ENCODE measurements at regions of chr2 and their contacts with region 1.

Region 1: DNA sequence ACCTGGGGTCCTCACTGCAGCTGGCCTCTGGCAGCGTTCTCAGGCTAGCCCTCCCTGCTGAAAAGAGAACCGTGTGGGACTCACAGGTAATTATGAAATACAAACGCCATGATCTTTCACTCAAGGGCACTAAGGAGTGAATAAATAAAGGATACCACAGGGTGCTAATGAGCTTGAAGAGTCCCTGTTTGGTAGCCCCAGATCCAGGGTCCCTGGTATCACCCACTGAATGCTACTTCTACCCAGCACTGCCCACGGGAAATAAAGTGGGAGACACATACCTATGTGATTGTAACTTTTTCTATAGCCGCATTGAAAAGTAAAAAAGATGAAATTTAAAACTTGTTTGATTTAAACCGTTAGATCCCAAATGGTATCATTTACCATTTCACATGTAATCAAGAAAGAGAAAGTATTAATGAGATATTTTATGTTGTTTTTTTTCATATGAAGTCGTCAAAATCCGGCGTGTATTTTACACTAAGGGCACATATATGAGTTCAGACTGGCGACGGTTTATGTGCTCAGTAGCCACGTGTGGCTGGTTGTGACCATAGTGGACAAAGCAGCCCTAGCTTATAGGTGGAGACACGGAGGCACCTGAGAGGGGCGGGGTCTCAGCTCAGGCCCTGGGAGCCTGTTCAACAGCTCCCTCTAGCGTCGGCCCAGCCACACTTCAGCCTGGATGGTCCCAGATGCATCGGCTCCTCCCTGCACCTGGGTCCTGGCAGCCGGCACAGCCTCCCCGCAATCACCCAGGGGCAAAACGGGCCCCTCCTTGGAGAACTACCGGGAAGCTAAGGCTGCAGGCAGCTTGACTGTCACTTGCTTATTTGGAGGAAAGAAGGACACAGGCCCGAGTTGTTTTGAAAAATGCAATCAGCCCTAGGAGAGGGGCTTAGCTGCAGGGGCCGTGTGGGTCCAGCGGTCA is 39.2 kb downstream of the ODC1 start:
- DNase-seq: peak; percentile 90
- H3K4me3 Mint-ChIP-seq: peak overlapping the region; percentile 60
- H3K27ac Mint-ChIP-seq: peak overlapping the region; percentile 95
- H3K4me1 Mint-ChIP-seq: peaks cover 45% of the 10 kb centered on the region
- H3K27me3 Mint-ChIP-seq: no peaks in the 10 kb centered on the region

Region 2: DNA sequence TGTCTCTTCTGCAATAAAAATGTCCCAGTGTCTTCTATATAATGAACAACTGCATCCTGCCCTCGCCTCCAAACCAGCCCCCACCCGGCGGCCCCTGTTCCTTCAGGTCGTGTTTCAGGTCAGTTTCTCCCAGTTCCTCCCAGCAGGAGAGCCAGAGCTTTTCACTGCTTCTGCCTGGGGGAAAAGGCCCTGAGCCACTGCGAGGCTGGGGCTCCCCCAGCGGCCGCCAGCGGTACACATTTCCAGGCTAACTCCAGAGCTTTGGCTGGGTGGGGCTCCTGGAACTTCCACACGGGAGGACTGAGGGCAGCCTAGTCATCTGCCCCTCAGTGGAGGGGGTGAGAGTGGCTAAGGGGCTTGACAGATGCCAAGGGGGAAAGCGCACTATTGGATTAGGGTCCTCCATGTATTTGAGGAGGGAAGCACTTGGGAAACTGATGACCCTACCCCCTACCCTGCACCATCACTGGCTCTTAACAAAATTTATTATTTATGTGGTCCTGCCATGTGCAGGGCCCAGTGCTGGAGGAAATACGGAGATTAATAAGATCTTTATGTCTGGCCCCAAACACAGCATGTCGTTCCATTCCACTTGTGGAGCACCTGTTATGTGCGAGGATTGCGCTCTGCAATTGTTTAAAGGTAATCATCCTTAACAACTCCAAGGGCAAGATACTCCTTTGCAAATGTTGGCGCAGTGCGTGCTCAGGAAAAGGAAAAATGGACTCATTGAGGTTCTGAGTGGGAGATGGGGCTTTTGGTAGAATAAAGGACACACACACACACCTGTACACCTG is 311.4 kb before region 1 on chr2:
- CTCF ChIA-PET with region 1: interaction called, 15 read pairs
- POLR2A ChIA-PET with region 1: no interaction called
- intact Hi-C with region 1: no loop called
- DNase-seq: peak; percentile 50
- H3K4me3 Mint-ChIP-seq: no peak overlapping the region
- H3K27ac Mint-ChIP-seq: no peak overlapping the region
- H3K4me1 Mint-ChIP-seq: no peaks in the 10 kb centered on the region
- H3K27me3 Mint-ChIP-seq: peaks cover 21% of the 10 kb centered on the region

Region 3: DNA sequence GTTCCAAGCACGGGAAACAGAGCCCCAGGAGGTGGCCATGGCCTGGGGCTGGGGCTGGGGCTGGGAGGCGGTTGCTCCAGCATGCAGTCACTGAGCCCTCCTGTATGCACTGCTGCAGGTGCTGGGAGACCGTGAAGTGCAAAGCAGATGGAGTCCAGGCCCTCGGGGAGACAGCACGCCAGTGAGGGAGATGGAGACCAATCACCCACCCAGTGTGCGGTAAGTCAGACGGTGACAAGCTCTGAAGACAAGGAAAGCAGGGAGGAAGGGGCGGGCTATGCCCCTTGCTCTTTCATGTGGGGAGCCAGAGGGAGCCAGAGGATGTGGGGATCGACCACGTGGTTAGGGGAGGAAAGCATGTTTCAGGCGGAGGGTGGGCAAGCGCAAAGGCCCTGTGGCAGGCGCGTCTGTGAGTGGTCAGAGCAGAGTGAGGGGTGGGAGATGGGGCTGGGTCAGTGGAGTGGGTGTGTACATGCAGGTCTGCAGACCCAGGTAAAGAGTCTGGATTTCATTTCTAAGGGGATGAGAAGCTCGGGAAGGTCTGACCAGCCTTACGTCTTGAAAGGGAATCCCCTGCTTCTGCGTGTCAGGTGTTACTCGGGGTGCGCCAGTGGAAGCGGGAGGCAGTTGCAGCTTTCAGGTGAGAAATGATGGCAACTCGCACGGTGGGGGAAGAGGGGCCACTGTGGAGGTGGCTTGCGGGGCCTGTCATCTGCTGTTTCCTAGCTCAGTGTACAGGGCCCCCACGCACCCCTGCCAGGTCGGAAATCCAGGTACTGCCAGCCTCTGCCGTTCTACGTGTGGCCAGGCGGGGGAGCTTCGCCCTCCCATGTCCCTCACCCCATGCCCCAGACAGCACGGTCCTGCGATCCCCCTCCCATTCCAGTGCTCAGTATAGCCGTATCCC is 266.9 kb before region 1 on chr2:
- CTCF ChIA-PET with region 1: interaction called, 73 read pairs
- POLR2A ChIA-PET with region 1: interaction called, 3 read pairs
- intact Hi-C with region 1: no loop called
- DNase-seq: peak; percentile 43
- H3K4me3 Mint-ChIP-seq: no peak overlapping the region
- H3K27ac Mint-ChIP-seq: no peak overlapping the region
- H3K4me1 Mint-ChIP-seq: peaks cover 13% of the 10 kb centered on the region
- H3K27me3 Mint-ChIP-seq: no peaks in the 10 kb centered on the region

Region 4: DNA sequence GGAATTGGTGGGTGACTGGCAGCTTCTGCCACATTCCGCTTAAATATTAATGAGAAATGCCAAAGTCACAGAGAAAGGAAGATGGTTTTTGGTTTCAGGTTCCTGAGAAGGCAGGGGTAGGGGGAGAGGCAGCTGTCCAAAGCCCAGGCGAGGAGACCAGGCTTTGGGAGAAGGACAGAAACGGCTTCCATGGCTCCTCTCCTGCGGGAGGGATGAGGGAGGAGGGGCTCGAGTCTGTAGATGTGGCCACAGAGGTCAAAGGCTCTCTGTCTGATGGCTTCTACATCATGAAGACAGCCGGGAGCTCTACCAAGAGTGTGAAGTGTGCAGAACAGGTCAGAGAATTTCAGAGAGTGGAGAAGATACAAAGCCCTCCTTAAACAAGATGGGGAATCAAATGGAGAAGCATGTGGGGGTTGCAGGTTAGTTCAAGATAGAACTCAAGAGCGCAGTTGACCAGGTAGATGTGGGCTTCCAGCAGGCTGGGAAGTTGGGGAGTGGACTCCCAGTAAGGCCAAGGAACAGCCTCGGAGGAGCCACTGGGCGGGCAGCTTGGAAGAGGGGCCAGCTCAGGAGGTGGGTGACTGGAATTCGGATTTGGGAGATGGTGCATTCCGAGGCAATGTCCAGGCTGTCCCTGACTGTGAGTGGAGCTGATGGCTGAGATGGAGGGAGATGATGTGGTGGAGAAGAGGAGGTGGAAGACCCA is 130.0 kb before region 1 on chr2:
- CTCF ChIA-PET with region 1: interaction called, 11 read pairs
- POLR2A ChIA-PET with region 1: no interaction called
- intact Hi-C with region 1: no loop called
- DNase-seq: no peak
- H3K4me3 Mint-ChIP-seq: no peak overlapping the region
- H3K27ac Mint-ChIP-seq: no peak overlapping the region
- H3K4me1 Mint-ChIP-seq: peaks cover 22% of the 10 kb centered on the region
- H3K27me3 Mint-ChIP-seq: no peaks in the 10 kb centered on the region

Region 5: GRCh38 chr2:10389573-10389972 is 19.3 kb before region 1 on chr2:
- CTCF ChIA-PET with region 1: interaction called, 21 read pairs
- POLR2A ChIA-PET with region 1: no interaction called
- intact Hi-C with region 1: no loop called
- DNase-seq: no peak
- H3K4me3 Mint-ChIP-seq: no peak overlapping the region
- H3K27ac Mint-ChIP-seq: peak overlapping the region; percentile 34
- H3K4me1 Mint-ChIP-seq: peaks cover 64% of the 10 kb centered on the region
- H3K27me3 Mint-ChIP-seq: no peaks in the 10 kb centered on the region

Region 6: GRCh38 chr2:10654069-10654468 is 245.2 kb after region 1 on chr2:
- CTCF ChIA-PET with region 1: no interaction called
- POLR2A ChIA-PET with region 1: no interaction called
- intact Hi-C with region 1: loop called (anchors 1 kb)
- DNase-seq: peak; percentile 85
- H3K4me3 Mint-ChIP-seq: no peak overlapping the region
- H3K27ac Mint-ChIP-seq: peak overlapping the region; percentile 80
- H3K4me1 Mint-ChIP-seq: peaks cover 44% of the 10 kb centered on the region
- H3K27me3 Mint-ChIP-seq: no peaks in the 10 kb centered on the region

Measured in activated CD4-positive, alpha-beta memory T cell treated with anti-CD3 and anti-CD28 coated beads for 36 hours (primary cell).